HCT116 (cell line): ENCODE measurements at regions of chr22 and their contacts with region 1.

Region 1: GRCh38 chr22:36977947-36978660 is 41.1 kb downstream of the TST start:
- DNase-seq: peak; percentile 70
- ATAC-seq: peak; percentile 88
- H3K4me3 ChIP-seq: peak overlapping the region; percentile 35 to 48
- H3K27ac ChIP-seq: no peak overlapping the region
- H3K4me1 ChIP-seq: peaks cover 5 to 12% of the 10 kb centered on the region in 2 experiments
- H3K27me3 ChIP-seq: no peaks in the 10 kb centered on the region
- CTCF ChIP-seq: peak; percentile 80 to 97 (median 92)
- POLR2A ChIP-seq: peak; percentile 41
- RAD21 ChIP-seq: peak; percentile 96

Region 2: GRCh38 chr22:36775964-36776669 is 202.0 kb before region 1 on chr22 and contains the start of gene IFT27:
- CTCF ChIA-PET with region 1: interaction called, 12 read pairs
- POLR2A ChIA-PET with region 1: no interaction called
- RAD21 ChIA-PET with region 1: no interaction called
- intact Hi-C with region 1: no loop called
- DNase-seq: peak; percentile 100
- ATAC-seq: peak; percentile 95
- H3K4me3 ChIP-seq: peak within 1 kb of the TSS; percentile 89 to 96
- H3K27ac ChIP-seq: peak within 1 kb of the TSS; percentile 24; the same call in 1 of the 2 replicates
- H3K4me1 ChIP-seq: peaks cover 5 to 20% of the 10 kb centered on the region in 2 experiments
- H3K27me3 ChIP-seq: no peaks in the 10 kb centered on the region
- CTCF ChIP-seq: no peak
- POLR2A ChIP-seq: peak; percentile 63
- RAD21 ChIP-seq: no peak
- total RNA-seq, gene IFT27: 23.2 TPM

Region 3: GRCh38 chr22:36856121-36856791 is 121.8 kb before region 1 on chr22:
- CTCF ChIA-PET with region 1: interaction called, 4 read pairs
- POLR2A ChIA-PET with region 1: no interaction called
- RAD21 ChIA-PET with region 1: no interaction called
- intact Hi-C with region 1: loop called (anchors 1 kb)
- DNase-seq: peak; percentile 73
- ATAC-seq: peak; percentile 92
- H3K4me3 ChIP-seq: peak overlapping the region in 1 of 2 experiments; percentile 8; a peak in 1 of 4 replicates
- H3K27ac ChIP-seq: no peak overlapping the region
- H3K4me1 ChIP-seq: peaks cover 0 to 19% of the 10 kb centered on the region in 2 experiments; a peak in 1 of 4 replicates
- H3K27me3 ChIP-seq: no peaks in the 10 kb centered on the region
- CTCF ChIP-seq: peak; percentile 100
- POLR2A ChIP-seq: no peak
- RAD21 ChIP-seq: peak; percentile 82

Region 4: GRCh38 chr22:36966851-36967540 is 11.1 kb before region 1 on chr22:
- CTCF ChIA-PET with region 1: interaction called, 23 read pairs
- POLR2A ChIA-PET with region 1: interaction called, 16 read pairs
- RAD21 ChIA-PET with region 1: interaction called in 1 of 2 experiments, 3 read pairs
- intact Hi-C with region 1: no loop called
- DNase-seq: no peak
- ATAC-seq: no peak
- H3K4me3 ChIP-seq: no peak overlapping the region
- H3K27ac ChIP-seq: no peak overlapping the region
- H3K4me1 ChIP-seq: peaks cover 5 to 17% of the 10 kb centered on the region in 2 experiments
- H3K27me3 ChIP-seq: no peaks in the 10 kb centered on the region
- CTCF ChIP-seq: no peak
- POLR2A ChIP-seq: no peak
- RAD21 ChIP-seq: no peak